ENCODE measurements at regions of chr10 and their contacts with region 1.

Region 1: GRCh38 chr10:72126184-72126871 is 38.0 kb upstream of the SPOCK2 start:
- DNase-seq: peak; percentile 53
- ATAC-seq: no peak
- H3K4me3 ChIP-seq: no peak overlapping the region
- H3K4me3 Mint-ChIP-seq: no peak overlapping the region
- H3K27ac ChIP-seq: no peak overlapping the region
- H3K27ac Mint-ChIP-seq: no peak overlapping the region
- H3K4me1 ChIP-seq: no peaks in the 10 kb centered on the region
- H3K4me1 Mint-ChIP-seq: no peaks in the 10 kb centered on the region
- H3K27me3 ChIP-seq: no peaks in the 10 kb centered on the region
- H3K27me3 Mint-ChIP-seq: no peaks in the 10 kb centered on the region
- CTCF ChIP-seq: peak; percentile 25

Region 2: DNA sequence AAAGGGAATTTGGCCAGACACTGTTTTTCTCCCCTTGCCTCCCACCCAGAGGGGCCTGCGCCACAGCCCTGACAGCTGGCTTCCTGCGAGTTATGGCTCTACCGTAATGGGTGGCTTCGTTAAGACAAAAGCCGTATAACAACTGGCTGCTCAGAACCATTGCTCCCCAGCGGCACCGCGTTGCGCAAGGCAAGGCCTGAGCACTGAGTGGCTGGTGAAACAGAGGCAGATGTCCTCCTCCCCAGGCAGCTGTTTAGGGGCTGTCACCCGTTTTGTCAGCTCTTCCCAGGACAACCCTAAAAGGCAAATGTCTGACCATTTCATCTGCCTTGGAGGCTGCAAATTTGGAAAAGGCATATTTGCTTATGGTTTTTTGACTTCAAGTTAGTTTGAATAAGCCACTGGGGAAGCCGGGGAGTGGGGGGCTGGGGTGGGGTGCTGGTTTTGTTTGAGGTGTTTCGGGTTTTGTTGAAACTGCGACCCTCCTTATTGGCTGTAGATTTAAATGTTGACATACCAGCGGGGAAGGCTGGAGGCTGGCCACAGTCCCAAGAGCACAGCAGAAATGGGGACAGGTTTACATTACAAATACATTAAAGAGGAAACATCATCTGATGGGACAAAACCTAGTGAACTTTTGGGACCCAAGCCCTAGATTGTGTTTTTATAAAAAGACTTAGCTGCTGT is 37.3 kb before region 1 on chr10:
- CTCF ChIA-PET with region 1: interaction called, 6 read pairs
- POLR2A ChIA-PET with region 1: no interaction called
- intact Hi-C with region 1: loop called (anchors 5 kb)
- DNase-seq: no peak
- ATAC-seq: no peak
- H3K4me3 ChIP-seq: peak overlapping the region in 4 of 5 experiments; percentile 79 to 93 (median 88)
- H3K4me3 Mint-ChIP-seq: peak overlapping the region; percentile 100
- H3K27ac ChIP-seq: peak overlapping the region; percentile 89 to 92
- H3K27ac Mint-ChIP-seq: peak overlapping the region; percentile 100
- H3K4me1 ChIP-seq: peaks cover 24 to 33% of the 10 kb centered on the region in 2 donors
- H3K4me1 Mint-ChIP-seq: peaks cover 47% of the 10 kb centered on the region
- H3K27me3 ChIP-seq: no peaks in the 10 kb centered on the region
- H3K27me3 Mint-ChIP-seq: no peaks in the 10 kb centered on the region
- CTCF ChIP-seq: no peak

Region 3: DNA sequence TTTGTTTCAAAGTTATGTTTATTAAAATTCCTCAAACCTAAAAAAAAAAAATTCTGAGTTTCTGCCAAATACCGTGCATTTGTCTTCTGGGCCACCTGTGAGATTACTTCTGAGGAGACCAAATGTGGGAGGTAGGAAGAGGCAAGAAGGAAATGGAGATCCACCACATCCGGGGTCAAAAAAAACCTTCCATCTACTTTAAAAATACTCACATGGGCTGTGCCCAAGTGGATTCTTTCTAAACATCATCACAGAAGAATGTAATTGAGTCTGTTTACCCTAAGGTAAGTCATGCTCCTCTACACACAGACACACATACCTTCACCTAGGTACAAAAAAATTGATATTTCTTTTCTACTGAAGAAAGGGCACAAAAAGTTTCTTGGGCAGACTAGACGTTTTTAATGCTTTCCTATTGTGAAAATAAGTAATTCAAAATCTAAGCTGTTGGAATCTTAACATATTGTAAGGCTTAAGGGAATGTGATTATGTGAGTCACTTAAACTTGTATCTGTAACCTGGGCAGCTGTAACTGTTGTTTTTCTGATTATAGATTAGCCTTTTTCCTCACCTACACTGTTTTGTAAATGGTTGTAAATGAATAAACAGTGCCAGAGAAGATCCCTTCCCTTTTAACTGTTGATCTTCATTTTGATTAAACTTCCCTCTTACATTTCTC is 18.9 kb before region 1 on chr10:
- CTCF ChIA-PET with region 1: no interaction called
- POLR2A ChIA-PET with region 1: no interaction called
- intact Hi-C with region 1: no loop called
- DNase-seq: no peak
- ATAC-seq: no peak
- H3K4me3 ChIP-seq: no peak overlapping the region
- H3K4me3 Mint-ChIP-seq: peak overlapping the region; percentile 2
- H3K27ac ChIP-seq: peak overlapping the region in 1 of 2 donors; percentile 29
- H3K27ac Mint-ChIP-seq: peak overlapping the region; percentile 44
- H3K4me1 ChIP-seq: peaks cover 16 to 31% of the 10 kb centered on the region in 2 donors
- H3K4me1 Mint-ChIP-seq: peaks cover 26% of the 10 kb centered on the region
- H3K27me3 ChIP-seq: no peaks in the 10 kb centered on the region
- H3K27me3 Mint-ChIP-seq: no peaks in the 10 kb centered on the region
- CTCF ChIP-seq: no peak

Region 4: DNA sequence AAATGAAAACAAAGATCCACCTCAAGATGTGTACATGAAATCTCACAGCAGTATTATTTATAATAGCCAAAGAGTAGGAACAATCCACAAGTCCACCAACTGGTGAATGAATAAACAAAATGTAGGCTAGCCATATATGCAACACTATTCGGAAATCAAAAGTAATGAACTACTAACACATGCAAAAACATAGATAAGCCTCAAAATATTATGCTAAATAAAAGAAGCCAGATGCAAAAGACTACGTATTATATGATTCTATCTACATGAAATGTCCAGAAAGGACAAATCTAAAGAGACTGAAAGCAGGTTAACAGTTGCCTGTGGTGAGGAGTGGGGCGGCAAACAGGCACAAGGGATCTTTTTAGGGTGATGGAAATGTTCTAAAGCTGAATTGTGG is 40.8 kb after region 1 on chr10:
- CTCF ChIA-PET with region 1: interaction called, 3 read pairs
- POLR2A ChIA-PET with region 1: interaction called, 10 read pairs
- intact Hi-C with region 1: no loop called
- DNase-seq: no peak
- ATAC-seq: no peak
- H3K4me3 ChIP-seq: no peak overlapping the region
- H3K4me3 Mint-ChIP-seq: no peak overlapping the region
- H3K27ac ChIP-seq: no peak overlapping the region
- H3K27ac Mint-ChIP-seq: no peak overlapping the region
- H3K4me1 ChIP-seq: no peaks in the 10 kb centered on the region
- H3K4me1 Mint-ChIP-seq: peaks cover 3% of the 10 kb centered on the region
- H3K27me3 ChIP-seq: no peaks in the 10 kb centered on the region
- H3K27me3 Mint-ChIP-seq: no peaks in the 10 kb centered on the region
- CTCF ChIP-seq: no peak

Region 5: DNA sequence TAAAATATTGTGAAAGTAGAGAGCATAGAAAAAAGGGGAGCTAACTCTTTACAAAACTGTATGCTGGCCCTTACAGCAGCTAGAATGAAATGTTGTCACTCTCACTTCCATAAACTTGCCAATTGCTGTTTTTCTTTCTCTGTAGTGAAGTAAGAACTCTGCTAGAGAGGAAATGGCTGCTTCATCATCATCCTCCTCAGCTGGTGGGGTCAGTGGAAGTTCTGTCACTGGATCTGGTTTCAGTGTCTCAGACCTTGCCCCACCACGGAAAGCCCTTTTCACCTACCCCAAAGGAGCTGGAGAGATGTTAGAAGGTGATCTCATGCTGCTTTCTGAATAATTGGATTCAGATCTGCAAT is 97.4 kb after region 1 on chr10:
- CTCF ChIA-PET with region 1: interaction called, 90 read pairs
- POLR2A ChIA-PET with region 1: no interaction called
- intact Hi-C with region 1: loop called (anchors 2 kb)
- DNase-seq: peak; percentile 34
- ATAC-seq: peak; percentile 24
- H3K4me3 ChIP-seq: no peak overlapping the region
- H3K4me3 Mint-ChIP-seq: peak overlapping the region; percentile 44
- H3K27ac ChIP-seq: peak overlapping the region; percentile 42 to 68
- H3K27ac Mint-ChIP-seq: peak overlapping the region; percentile 75
- H3K4me1 ChIP-seq: peaks cover 58 to 70% of the 10 kb centered on the region in 2 donors
- H3K4me1 Mint-ChIP-seq: peaks cover 55% of the 10 kb centered on the region
- H3K27me3 ChIP-seq: no peaks in the 10 kb centered on the region
- H3K27me3 Mint-ChIP-seq: no peaks in the 10 kb centered on the region
- CTCF ChIP-seq: no peak

Region 6: GRCh38 chr10:72831696-72832355 is 705.5 kb after region 1 on chr10:
- CTCF ChIA-PET with region 1: no interaction called
- POLR2A ChIA-PET with region 1: no interaction called
- intact Hi-C with region 1: no loop called
- DNase-seq: no peak
- ATAC-seq: no peak
- H3K4me3 ChIP-seq: no peak overlapping the region
- H3K4me3 Mint-ChIP-seq: no peak overlapping the region
- H3K27ac ChIP-seq: no peak overlapping the region
- H3K27ac Mint-ChIP-seq: no peak overlapping the region
- H3K4me1 ChIP-seq: no peaks in the 10 kb centered on the region
- H3K4me1 Mint-ChIP-seq: peaks cover 2% of the 10 kb centered on the region
- H3K27me3 ChIP-seq: no peaks in the 10 kb centered on the region
- H3K27me3 Mint-ChIP-seq: no peaks in the 10 kb centered on the region
- CTCF ChIP-seq: no peak